CD4-positive, alpha-beta T cell (primary cell): ENCODE measurements at regions of chr2 and their contacts with region 1.

Region 1: DNA sequence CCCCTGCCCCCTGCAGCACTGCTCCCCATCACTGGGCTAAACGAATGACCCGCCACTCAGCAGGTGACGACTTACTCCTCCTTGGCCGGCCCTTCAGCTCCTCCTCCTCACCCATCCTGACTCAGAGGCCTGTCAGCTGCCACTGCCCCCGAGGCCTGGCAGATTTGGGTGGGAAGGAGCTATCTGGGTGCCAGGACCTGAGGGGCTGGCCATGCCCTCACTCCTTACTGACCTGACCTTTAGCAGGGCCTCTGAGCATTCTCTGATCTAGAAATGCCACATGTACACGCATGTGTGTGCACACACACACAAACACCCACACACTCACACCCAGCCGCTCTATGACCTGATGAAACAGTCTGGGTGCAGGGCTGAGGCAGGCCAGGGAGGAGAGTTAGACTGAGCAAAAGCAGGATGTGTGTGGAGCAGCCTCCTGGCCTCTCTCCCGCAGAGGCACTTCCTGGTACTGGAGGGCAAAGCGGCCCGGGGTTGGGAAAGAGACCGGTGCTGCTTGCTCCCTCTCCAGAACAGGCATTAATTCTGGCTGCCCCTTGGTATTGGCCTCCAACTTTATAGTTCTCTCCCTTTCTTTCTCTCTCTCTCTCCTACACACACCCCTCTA is 68.0 kb downstream of the ZFP36L2 start:
- DNase-seq: peak in 11 of 14 experiments; percentile 43 to 85 (median 66)
- ATAC-seq: peak; percentile 67
- H3K4me3 ChIP-seq: peak overlapping the region; percentile 30
- H3K4me3 Mint-ChIP-seq: peak overlapping the region; percentile 77
- H3K27ac ChIP-seq: peak overlapping the region; percentile 91 to 94
- H3K27ac Mint-ChIP-seq: peak overlapping the region; percentile 98
- H3K4me1 ChIP-seq: peaks cover 89% of the 10 kb centered on the region
- H3K4me1 Mint-ChIP-seq: peaks cover 89% of the 10 kb centered on the region
- H3K27me3 ChIP-seq: no peaks in the 10 kb centered on the region
- H3K27me3 Mint-ChIP-seq: no peaks in the 10 kb centered on the region
- CTCF ChIP-seq: no peak

Region 2: GRCh38 chr2:41414486-41415230 is 1743.7 kb before region 1 on chr2:
- CTCF ChIA-PET with region 1: no interaction called
- POLR2A ChIA-PET with region 1: no interaction called
- intact Hi-C with region 1: no loop called
- DNase-seq: peak in 3 of 14 experiments; percentile 4 to 10 (median 8)
- ATAC-seq: no peak
- H3K4me3 ChIP-seq: no peak overlapping the region
- H3K4me3 Mint-ChIP-seq: no peak overlapping the region
- H3K27ac ChIP-seq: no peak overlapping the region
- H3K27ac Mint-ChIP-seq: no peak overlapping the region
- H3K4me1 ChIP-seq: no peaks in the 10 kb centered on the region
- H3K4me1 Mint-ChIP-seq: no peaks in the 10 kb centered on the region
- H3K27me3 ChIP-seq: no peaks in the 10 kb centered on the region
- H3K27me3 Mint-ChIP-seq: no peaks in the 10 kb centered on the region
- CTCF ChIP-seq: no peak

Region 3: GRCh38 chr2:43139996-43140621 is 18.3 kb before region 1 on chr2:
- CTCF ChIA-PET with region 1: interaction called, 5 read pairs
- POLR2A ChIA-PET with region 1: interaction called, 53 read pairs
- intact Hi-C with region 1: loop called (anchors 1 to 2 kb)
- DNase-seq: peak in 5 of 14 experiments; percentile 11 to 76 (median 59)
- ATAC-seq: no peak
- H3K4me3 ChIP-seq: no peak overlapping the region
- H3K4me3 Mint-ChIP-seq: peak overlapping the region; percentile 31
- H3K27ac ChIP-seq: peak overlapping the region; percentile 23 to 54
- H3K27ac Mint-ChIP-seq: peak overlapping the region; percentile 99
- H3K4me1 ChIP-seq: peaks cover 85% of the 10 kb centered on the region
- H3K4me1 Mint-ChIP-seq: peaks cover 76% of the 10 kb centered on the region
- H3K27me3 ChIP-seq: no peaks in the 10 kb centered on the region
- H3K27me3 Mint-ChIP-seq: no peaks in the 10 kb centered on the region
- CTCF ChIP-seq: no peak

Region 4: DNA sequence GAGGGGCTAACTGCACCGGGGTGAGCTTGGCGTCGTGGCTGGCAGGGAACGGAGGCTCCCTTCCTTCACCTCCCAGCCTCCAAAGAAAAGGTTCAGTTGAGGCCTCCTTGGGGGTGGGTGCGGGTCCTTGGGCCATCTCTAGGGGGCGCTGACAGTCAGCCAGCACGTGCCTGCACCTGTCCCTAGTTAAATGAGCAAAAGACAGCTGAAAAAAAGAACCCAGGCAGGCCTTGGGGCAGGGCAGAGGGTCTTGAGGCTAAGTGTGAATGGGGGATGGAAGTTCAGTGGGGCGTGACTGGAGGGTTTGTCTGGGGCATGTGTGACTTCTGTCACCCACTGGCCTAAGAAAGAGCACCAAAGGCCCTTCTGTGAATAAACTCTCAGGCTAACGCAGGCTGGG is 11.6 kb after region 1 on chr2:
- CTCF ChIA-PET with region 1: interaction called, 11 read pairs
- POLR2A ChIA-PET with region 1: interaction called, 29 read pairs
- intact Hi-C with region 1: loop called (anchors 1 to 2 kb)
- DNase-seq: peak; percentile 49 to 83 (median 70)
- ATAC-seq: peak; percentile 16
- H3K4me3 ChIP-seq: peak overlapping the region; percentile 26
- H3K4me3 Mint-ChIP-seq: peak overlapping the region; percentile 13
- H3K27ac ChIP-seq: peak overlapping the region; percentile 72 to 76
- H3K27ac Mint-ChIP-seq: peak overlapping the region; percentile 97
- H3K4me1 ChIP-seq: peaks cover 85% of the 10 kb centered on the region
- H3K4me1 Mint-ChIP-seq: peaks cover 82% of the 10 kb centered on the region
- H3K27me3 ChIP-seq: no peaks in the 10 kb centered on the region
- H3K27me3 Mint-ChIP-seq: no peaks in the 10 kb centered on the region
- CTCF ChIP-seq: peak; percentile 75

Region 5: DNA sequence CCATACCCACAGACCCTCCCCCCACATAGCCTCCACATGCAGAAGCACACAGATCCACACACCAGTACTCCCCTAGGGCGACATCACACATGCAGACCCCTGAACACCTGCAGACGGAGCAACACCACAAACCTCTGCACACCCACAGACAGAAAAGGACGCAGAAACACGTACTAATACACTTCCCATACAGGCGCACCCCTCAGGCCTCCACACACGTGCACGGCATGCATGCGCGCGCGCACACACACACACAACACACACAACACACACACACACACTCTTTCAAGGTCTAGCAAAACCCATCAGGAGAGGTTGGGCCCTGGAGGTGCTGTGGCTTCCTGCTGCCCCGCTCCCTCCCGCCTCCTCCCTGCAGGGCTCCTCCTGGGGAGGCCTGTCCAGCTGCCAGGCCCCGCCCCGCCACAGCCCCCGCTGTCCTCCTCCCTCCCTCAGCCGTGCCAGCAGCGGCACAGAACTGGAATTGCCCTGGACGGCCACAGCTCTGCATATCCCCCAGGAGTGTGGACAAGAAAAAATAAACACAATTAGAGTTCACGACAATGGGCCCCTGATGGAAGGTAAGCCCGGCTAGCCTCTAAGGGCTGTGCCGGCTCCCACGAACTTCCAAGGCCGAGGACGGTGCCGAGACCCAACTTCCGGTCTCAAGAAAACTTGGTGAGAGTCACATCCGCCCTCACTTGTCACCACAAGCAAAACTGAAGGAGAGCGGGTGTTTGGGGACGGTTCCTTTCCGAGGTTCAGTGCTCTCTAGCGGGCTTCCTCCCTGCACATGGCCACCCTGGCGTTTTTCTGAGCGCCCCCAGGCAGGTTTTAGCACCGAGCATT is 61.2 kb after region 1 on chr2:
- CTCF ChIA-PET with region 1: no interaction called
- POLR2A ChIA-PET with region 1: interaction called, 85 read pairs
- intact Hi-C with region 1: loop called in 1 of 2 experiments (anchors 1 kb)
- DNase-seq: peak; percentile 65 to 93 (median 76)
- ATAC-seq: peak; percentile 38
- H3K4me3 ChIP-seq: peak overlapping the region; percentile 97
- H3K4me3 Mint-ChIP-seq: peak overlapping the region; percentile 87
- H3K27ac ChIP-seq: peak overlapping the region; percentile 62 to 92
- H3K27ac Mint-ChIP-seq: peak overlapping the region; percentile 98
- H3K4me1 ChIP-seq: peaks cover 69% of the 10 kb centered on the region
- H3K4me1 Mint-ChIP-seq: peaks cover 62% of the 10 kb centered on the region
- H3K27me3 ChIP-seq: no peaks in the 10 kb centered on the region
- H3K27me3 Mint-ChIP-seq: peaks cover 19% of the 10 kb centered on the region
- CTCF ChIP-seq: no peak

Region 6: GRCh38 chr2:43426305-43427031 is 268.1 kb after region 1 on chr2:
- CTCF ChIA-PET with region 1: no interaction called
- POLR2A ChIA-PET with region 1: no interaction called
- intact Hi-C with region 1: no loop called
- DNase-seq: peak; percentile 18 to 82 (median 50)
- ATAC-seq: peak; percentile 91
- H3K4me3 ChIP-seq: no peak overlapping the region
- H3K4me3 Mint-ChIP-seq: peak overlapping the region; percentile 32
- H3K27ac ChIP-seq: peak overlapping the region in 1 of 2 donors; percentile 51
- H3K27ac Mint-ChIP-seq: peak overlapping the region; percentile 81
- H3K4me1 ChIP-seq: peaks cover 22% of the 10 kb centered on the region
- H3K4me1 Mint-ChIP-seq: peaks cover 35% of the 10 kb centered on the region
- H3K27me3 ChIP-seq: no peaks in the 10 kb centered on the region
- H3K27me3 Mint-ChIP-seq: no peaks in the 10 kb centered on the region
- CTCF ChIP-seq: no peak

Region 7: GRCh38 chr2:43595603-43596412 is 437.4 kb after region 1 on chr2 and contains the start of gene THADA:
- CTCF ChIA-PET with region 1: no interaction called
- POLR2A ChIA-PET with region 1: no interaction called
- intact Hi-C with region 1: no loop called
- DNase-seq: peak; percentile 90 to 98 (median 94)
- ATAC-seq: peak; percentile 90
- H3K4me3 ChIP-seq: peak within 1 kb of the TSS; percentile 84
- H3K4me3 Mint-ChIP-seq: peak within 1 kb of the TSS; percentile 97
- H3K27ac ChIP-seq: peak within 1 kb of the TSS; percentile 68 to 96
- H3K27ac Mint-ChIP-seq: peak within 1 kb of the TSS; percentile 93
- H3K4me1 ChIP-seq: peaks cover 21% of the 10 kb centered on the region
- H3K4me1 Mint-ChIP-seq: peaks cover 35% of the 10 kb centered on the region
- H3K27me3 ChIP-seq: no peaks in the 10 kb centered on the region
- H3K27me3 Mint-ChIP-seq: no peaks in the 10 kb centered on the region
- CTCF ChIP-seq: no peak
- total RNA-seq, gene THADA: 29.3 to 32.9 TPM